CD4-positive, alpha-beta T cell (primary cell): ENCODE measurements at regions of chr1 and their contacts with region 1.

Region 1: DNA sequence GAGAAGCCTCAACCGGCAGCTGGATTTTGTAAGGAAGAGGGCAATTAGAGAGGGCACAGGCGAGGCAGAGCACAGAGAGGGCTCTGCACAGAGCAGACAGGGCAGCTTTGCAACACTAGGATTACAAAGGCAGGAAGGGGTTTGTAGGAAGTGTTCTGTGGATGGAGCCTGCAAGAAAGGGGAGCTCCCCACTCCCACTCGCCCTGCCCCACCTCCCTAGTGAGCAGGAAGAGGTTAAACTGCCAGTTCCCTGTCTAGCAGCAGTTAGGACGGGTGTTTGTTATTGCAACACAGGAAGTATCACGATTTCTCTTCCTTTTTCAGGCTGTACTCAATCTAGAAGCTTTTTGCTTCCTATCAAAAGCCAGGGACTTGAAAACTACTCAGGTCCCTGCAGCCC is 63.3 kb upstream of the LRRC8D start:
- DNase-seq: peak in 11 of 14 experiments; percentile 15 to 76 (median 38)
- ATAC-seq: peak; percentile 74
- H3K4me3 ChIP-seq: peak overlapping the region; percentile 41
- H3K4me3 Mint-ChIP-seq: peak overlapping the region; percentile 82
- H3K27ac ChIP-seq: peak overlapping the region; percentile 64 to 77
- H3K27ac Mint-ChIP-seq: peak overlapping the region; percentile 86
- H3K4me1 ChIP-seq: peaks cover 71% of the 10 kb centered on the region
- H3K4me1 Mint-ChIP-seq: peaks cover 89% of the 10 kb centered on the region
- H3K27me3 ChIP-seq: no peaks in the 10 kb centered on the region
- H3K27me3 Mint-ChIP-seq: no peaks in the 10 kb centered on the region
- CTCF ChIP-seq: no peak

Region 2: DNA sequence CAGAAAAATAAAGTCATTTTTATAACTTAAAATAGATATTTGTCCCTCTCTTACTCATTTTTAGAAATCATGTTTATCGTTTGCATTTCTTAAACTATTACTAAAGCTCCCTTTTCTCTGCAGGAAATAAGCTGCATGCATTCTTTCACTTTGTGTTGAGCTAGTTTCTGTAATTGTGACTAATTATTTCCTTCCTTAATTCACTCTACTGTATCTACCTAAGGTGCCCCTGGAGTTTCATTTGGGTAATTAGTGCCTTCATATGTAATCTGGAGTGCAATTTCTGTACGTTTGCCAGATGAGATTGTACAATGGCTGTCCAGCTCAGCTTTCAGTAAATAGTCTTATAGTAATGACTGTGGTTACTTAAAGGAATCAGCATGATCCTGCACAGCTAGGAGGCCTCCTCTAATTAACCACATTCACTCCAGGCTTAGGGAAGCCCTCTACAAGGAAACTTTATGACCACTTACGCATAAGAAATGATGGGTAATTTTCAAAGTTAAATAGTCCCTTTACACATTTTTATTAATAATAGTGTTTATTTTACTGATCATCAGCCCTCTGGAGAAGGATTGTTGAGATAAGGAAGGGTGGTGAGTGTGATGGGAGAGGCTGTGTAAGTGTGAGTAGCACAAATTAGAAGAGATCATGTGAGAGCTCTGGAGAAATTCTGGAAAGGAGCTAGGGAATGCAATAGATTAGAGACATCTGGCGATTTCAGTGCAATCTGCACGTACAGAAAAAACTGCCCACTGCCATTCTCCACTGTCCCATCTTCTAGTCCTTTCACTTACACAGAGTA is 37.8 kb before region 1 on chr1:
- CTCF ChIA-PET with region 1: interaction called, 18 read pairs
- POLR2A ChIA-PET with region 1: interaction called, 9 read pairs
- intact Hi-C with region 1: loop called (anchors 5 kb)
- DNase-seq: peak in 3 of 14 experiments; percentile 59 to 80 (median 60)
- ATAC-seq: peak; percentile 80
- H3K4me3 ChIP-seq: no peak overlapping the region
- H3K4me3 Mint-ChIP-seq: peak overlapping the region; percentile 64
- H3K27ac ChIP-seq: peak overlapping the region in 1 of 2 donors; percentile 25
- H3K27ac Mint-ChIP-seq: peak overlapping the region; percentile 72
- H3K4me1 ChIP-seq: peaks cover 19% of the 10 kb centered on the region
- H3K4me1 Mint-ChIP-seq: peaks cover 78% of the 10 kb centered on the region
- H3K27me3 ChIP-seq: no peaks in the 10 kb centered on the region
- H3K27me3 Mint-ChIP-seq: no peaks in the 10 kb centered on the region
- CTCF ChIP-seq: no peak

Region 3: DNA sequence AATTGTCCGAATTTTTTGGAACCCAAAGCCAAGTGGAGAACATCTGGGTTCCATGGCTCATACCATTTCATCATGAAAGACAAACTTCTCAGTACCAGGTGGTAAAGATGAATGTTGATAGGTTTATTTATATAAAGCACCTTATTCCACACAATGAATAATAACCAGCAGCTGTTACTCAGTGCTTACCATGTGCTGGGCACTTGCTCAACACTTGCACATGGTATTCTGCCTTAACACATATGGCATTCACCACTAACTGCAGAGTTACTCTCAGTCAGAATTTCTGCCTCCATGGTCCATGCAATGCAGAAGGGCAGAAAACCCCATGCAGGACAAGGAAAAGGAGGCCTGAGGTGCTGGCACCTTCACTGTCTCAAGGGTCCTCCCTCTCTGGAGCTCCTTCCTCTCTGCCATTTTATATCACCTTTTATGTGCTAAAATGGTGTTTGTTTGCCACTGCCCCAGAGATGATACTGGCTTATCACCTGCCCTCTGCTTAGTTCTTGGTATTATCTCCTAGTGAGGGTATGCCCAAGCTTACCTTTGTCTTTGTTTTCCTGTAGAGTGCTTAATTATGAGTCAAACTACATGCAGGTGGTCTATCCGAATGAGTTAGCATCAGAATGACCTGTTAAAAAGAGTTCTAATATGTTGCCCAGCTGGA is 160.7 kb after region 1 on chr1:
- CTCF ChIA-PET with region 1: no interaction called
- POLR2A ChIA-PET with region 1: no interaction called
- intact Hi-C with region 1: no loop called
- DNase-seq: no peak
- ATAC-seq: no peak
- H3K4me3 ChIP-seq: no peak overlapping the region
- H3K4me3 Mint-ChIP-seq: no peak overlapping the region
- H3K27ac ChIP-seq: no peak overlapping the region
- H3K27ac Mint-ChIP-seq: no peak overlapping the region
- H3K4me1 ChIP-seq: no peaks in the 10 kb centered on the region
- H3K4me1 Mint-ChIP-seq: peaks cover 18% of the 10 kb centered on the region
- H3K27me3 ChIP-seq: no peaks in the 10 kb centered on the region
- H3K27me3 Mint-ChIP-seq: no peaks in the 10 kb centered on the region
- CTCF ChIP-seq: no peak

Region 4: DNA sequence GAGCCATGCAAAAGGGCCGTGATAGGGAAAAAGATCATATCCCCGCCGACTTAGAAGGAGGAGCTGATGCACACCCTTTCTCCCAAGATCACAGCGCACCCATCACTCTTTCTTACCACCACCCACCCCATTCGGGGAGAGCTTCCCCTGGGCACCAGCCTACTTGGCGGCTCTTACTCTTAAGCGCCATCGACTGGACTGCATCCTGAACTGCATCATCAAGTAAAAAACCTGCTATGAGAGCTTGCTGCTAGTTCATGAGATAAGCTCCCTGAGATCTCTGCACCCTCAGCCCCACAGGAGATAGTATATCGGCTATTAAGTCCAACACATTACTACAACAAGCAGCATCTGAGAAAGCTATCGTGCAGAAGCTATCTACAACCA is 834.4 kb after region 1 on chr1:
- CTCF ChIA-PET with region 1: no interaction called
- POLR2A ChIA-PET with region 1: no interaction called
- intact Hi-C with region 1: no loop called
- DNase-seq: no peak
- ATAC-seq: no peak
- H3K4me3 ChIP-seq: no peak overlapping the region
- H3K4me3 Mint-ChIP-seq: no peak overlapping the region
- H3K27ac ChIP-seq: no peak overlapping the region
- H3K27ac Mint-ChIP-seq: no peak overlapping the region
- H3K4me1 ChIP-seq: no peaks in the 10 kb centered on the region
- H3K4me1 Mint-ChIP-seq: no peaks in the 10 kb centered on the region
- H3K27me3 ChIP-seq: peaks cover 9 to 10% of the 10 kb centered on the region in 2 experiments
- H3K27me3 Mint-ChIP-seq: peaks cover 28% of the 10 kb centered on the region
- CTCF ChIP-seq: no peak